Activated CD4-positive, alpha-beta memory T cell treated with anti-CD3 and anti-CD28 coated beads, Interleukin-2, amount 10 ng/mL, durations not matched to agents 7 days and 5 days (primary cell): ENCODE measurements at regions of chr11 and their contacts with region 1.

Region 1: GRCh38 chr11:14907411-14908213 is 15.6 kb upstream of the CYP2R1 start:
- DNase-seq: peak; percentile 89
- H3K4me3 Mint-ChIP-seq: no peak overlapping the region
- H3K27ac Mint-ChIP-seq: peak overlapping the region; percentile 56
- H3K4me1 Mint-ChIP-seq: peaks cover 49% of the 10 kb centered on the region
- H3K27me3 Mint-ChIP-seq: no peaks in the 10 kb centered on the region

Region 2: GRCh38 chr11:14519917-14520746 is 387.5 kb before region 1 on chr11 and contains the start of gene PSMA1:
- CTCF ChIA-PET with region 1: interaction called, 25 read pairs
- POLR2A ChIA-PET with region 1: interaction called, 21 read pairs
- DNase-seq: peak; percentile 95
- H3K4me3 Mint-ChIP-seq: peak within 1 kb of the TSS; percentile 92
- H3K27ac Mint-ChIP-seq: peak within 1 kb of the TSS; percentile 94
- H3K4me1 Mint-ChIP-seq: peaks cover 25% of the 10 kb centered on the region
- H3K27me3 Mint-ChIP-seq: no peaks in the 10 kb centered on the region
- total RNA-seq, gene PSMA1: 232 to 238 TPM

Region 3: DNA sequence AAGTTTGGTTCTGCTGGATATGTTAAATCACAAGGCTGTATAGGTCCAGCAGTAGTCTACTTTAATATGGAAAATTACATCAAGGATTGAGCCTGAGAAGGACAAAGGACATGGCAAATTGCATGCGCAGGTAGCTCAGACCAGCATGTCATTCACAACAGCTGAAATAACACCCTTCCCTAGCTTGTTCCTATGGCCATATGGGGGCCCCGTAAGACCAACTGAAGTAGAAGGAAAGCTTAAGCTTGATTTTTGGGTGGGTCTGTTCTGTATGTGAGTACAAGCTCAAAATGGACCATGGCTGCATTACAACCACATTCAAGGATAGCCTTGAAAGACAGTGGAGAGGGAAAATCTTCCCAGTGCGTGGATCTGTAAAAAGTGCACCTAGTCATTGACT is 284.6 kb before region 1 on chr11:
- CTCF ChIA-PET with region 1: interaction called, 17 read pairs
- POLR2A ChIA-PET with region 1: no interaction called
- DNase-seq: no peak
- H3K4me3 Mint-ChIP-seq: no peak overlapping the region
- H3K27ac Mint-ChIP-seq: no peak overlapping the region
- H3K4me1 Mint-ChIP-seq: peaks cover 24% of the 10 kb centered on the region
- H3K27me3 Mint-ChIP-seq: no peaks in the 10 kb centered on the region

Region 4: DNA sequence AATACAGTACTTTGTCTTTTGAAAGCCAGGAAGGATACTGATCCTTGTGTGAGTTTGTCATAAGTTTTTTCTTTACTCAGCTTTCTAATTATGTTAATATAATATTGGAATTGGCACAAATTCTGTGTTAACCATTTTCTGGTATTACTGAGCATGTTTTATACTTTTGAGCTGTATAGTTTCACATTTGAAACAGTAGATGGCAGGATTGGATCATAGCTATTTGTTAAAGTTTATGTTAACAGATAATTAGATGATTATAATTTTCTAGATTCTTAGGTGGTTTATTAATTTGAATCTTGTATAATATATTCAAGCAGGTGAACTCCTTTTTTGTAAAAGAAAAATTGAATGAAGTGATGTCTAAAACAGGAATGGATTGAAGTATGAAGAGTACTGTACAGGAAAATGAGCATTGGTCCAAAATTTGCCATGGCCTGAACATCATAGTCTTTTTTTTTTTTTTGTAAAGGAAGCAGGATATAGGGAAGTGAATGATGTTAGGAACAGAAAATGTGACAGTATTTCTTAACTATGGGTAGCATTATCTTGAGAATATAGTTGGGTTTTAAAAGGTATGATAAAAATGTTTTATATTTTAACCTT is 117.6 kb before region 1 on chr11:
- CTCF ChIA-PET with region 1: interaction called, 89 read pairs
- POLR2A ChIA-PET with region 1: interaction called, 10 read pairs
- DNase-seq: no peak
- H3K4me3 Mint-ChIP-seq: no peak overlapping the region
- H3K27ac Mint-ChIP-seq: no peak overlapping the region
- H3K4me1 Mint-ChIP-seq: peaks cover 2% of the 10 kb centered on the region
- H3K27me3 Mint-ChIP-seq: no peaks in the 10 kb centered on the region

Region 5: DNA sequence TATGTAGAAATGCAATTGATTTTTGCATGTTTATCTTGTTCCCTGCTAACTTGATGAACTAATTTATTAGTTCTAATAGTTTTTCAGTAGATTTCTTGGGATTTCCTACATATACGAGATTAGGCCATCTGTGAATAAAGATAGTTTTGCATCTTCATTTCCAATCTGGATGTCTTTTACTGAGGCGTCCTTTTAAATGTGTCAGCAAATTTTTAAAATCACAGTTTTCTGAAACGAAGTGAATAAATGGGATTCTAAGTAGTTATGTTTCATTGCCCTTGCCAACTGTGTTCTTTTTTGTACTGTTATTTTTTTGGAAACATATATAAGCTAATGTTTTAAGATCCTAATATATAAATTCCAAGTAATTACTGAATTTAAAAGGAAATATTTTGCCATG is 65.6 kb before region 1 on chr11:
- CTCF ChIA-PET with region 1: no interaction called
- POLR2A ChIA-PET with region 1: no interaction called
- DNase-seq: no peak
- H3K4me3 Mint-ChIP-seq: no peak overlapping the region
- H3K27ac Mint-ChIP-seq: no peak overlapping the region
- H3K4me1 Mint-ChIP-seq: no peaks in the 10 kb centered on the region
- H3K27me3 Mint-ChIP-seq: no peaks in the 10 kb centered on the region

Region 6: GRCh38 chr11:14924318-14924717 is 16.7 kb after region 1 on chr11:
- CTCF ChIA-PET with region 1: interaction called, 40 read pairs
- POLR2A ChIA-PET with region 1: no interaction called
- DNase-seq: no peak
- H3K4me3 Mint-ChIP-seq: no peak overlapping the region
- H3K27ac Mint-ChIP-seq: no peak overlapping the region
- H3K4me1 Mint-ChIP-seq: no peaks in the 10 kb centered on the region
- H3K27me3 Mint-ChIP-seq: peaks cover 6% of the 10 kb centered on the region

Region 7: DNA sequence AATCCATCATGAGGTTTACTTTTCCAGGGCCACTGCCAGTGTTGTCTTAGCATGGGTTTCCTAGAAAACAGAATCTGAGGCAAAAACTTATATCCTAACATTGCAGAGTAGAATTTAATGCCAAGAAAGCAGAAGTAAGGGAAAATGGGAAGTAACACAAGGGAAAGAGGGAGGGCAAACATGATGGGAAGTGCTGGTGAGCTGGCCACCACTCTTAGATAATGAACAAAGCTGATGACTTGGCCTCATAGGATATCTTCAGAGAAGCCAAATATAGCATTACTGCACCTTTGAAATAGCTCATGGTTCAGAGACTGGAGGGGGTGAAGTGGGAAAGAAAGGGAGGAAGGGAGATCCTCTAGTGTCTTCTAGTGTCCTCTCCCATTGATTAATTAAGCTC is 141.0 kb after region 1 on chr11:
- CTCF ChIA-PET with region 1: no interaction called
- POLR2A ChIA-PET with region 1: no interaction called
- DNase-seq: no peak
- H3K4me3 Mint-ChIP-seq: no peak overlapping the region
- H3K27ac Mint-ChIP-seq: no peak overlapping the region
- H3K4me1 Mint-ChIP-seq: peaks cover 2% of the 10 kb centered on the region
- H3K27me3 Mint-ChIP-seq: peaks cover 3% of the 10 kb centered on the region

Region 8: DNA sequence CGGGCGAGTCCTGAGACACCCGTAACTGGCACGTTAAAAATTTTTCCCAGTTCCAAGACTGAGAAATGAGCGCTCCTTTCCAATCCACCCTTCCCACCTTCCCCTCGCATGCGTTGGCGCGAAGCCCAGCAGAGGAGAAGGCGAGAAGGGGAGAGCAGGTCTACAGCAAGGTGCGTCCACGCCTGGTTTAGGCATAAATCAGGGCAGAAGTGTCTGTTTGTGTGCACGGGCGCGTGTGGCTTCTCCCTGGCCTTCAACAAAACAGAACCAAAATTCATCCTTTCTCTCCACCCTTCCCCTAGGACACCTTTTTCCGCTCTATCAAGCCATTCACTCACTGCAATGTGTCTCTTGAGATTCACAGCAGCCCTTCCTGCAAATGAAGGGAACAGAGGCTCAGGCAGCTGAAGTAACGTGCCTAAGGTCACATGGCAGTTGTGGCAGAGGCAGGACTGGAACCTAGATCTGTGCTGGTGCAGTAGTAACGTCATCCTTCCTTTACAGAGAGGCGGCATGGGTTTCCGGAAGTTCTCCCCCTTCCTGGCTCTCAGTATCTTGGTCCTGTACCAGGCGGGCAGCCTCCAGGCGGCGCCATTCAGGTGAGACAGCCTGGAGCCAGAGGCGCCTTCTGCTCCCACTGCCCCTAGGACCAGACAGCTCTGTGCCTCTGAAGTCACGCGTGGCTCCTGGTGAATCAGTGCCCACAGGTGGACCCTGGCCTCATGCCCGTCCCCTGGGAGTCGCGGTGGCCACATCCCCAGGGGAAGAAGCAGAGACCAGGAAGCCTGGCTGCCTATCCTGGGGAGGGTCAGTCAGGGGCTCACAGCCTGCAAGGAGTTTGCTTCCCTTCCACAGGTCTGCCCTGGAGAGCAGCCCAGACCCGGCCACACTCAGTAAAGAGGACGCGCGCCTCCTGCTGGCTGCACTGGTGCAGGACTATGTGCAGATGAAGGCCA is 166.9 kb after region 1 on chr11:
- CTCF ChIA-PET with region 1: interaction called, 135 read pairs
- POLR2A ChIA-PET with region 1: interaction called, 4 read pairs
- DNase-seq: peak; percentile 87
- H3K4me3 Mint-ChIP-seq: peak overlapping the region; percentile 63
- H3K27ac Mint-ChIP-seq: peak overlapping the region; percentile 12
- H3K4me1 Mint-ChIP-seq: peaks cover 19% of the 10 kb centered on the region
- H3K27me3 Mint-ChIP-seq: peaks cover 23% of the 10 kb centered on the region